ENCODE measurements at regions of chr17 and their contacts with region 1.

Region 1: GRCh38 chr17:40490289-40490853 is 11.1 kb downstream of the TNS4 start:
- DNase-seq: no peak
- H3K4me3 ChIP-seq: no peak overlapping the region
- H3K27ac ChIP-seq: no peak overlapping the region
- H3K4me1 ChIP-seq: no peaks in the 10 kb centered on the region
- H3K27me3 ChIP-seq: peaks cover 2 to 6% of the 10 kb centered on the region in 2 experiments
- CTCF ChIP-seq: no peak
- POLR2A ChIP-seq: no peak

Region 2: GRCh38 chr17:40251576-40251975 is 238.8 kb before region 1 on chr17:
- CTCF ChIA-PET with region 1: no interaction called
- POLR2A ChIA-PET with region 1: no interaction called
- dilution Hi-C with region 1: no loop called
- intact Hi-C with region 1: no loop called
- DNase-seq: peak; percentile 88
- H3K4me3 ChIP-seq: no peak overlapping the region
- H3K27ac ChIP-seq: no peak overlapping the region
- H3K4me1 ChIP-seq: peaks cover 8% of the 10 kb centered on the region
- H3K27me3 ChIP-seq: no peaks in the 10 kb centered on the region
- CTCF ChIP-seq: no peak
- POLR2A ChIP-seq: no peak

Region 3: GRCh38 chr17:40542558-40543411 is 52.4 kb after region 1 on chr17:
- CTCF ChIA-PET with region 1: no interaction called
- POLR2A ChIA-PET with region 1: interaction called, 16 read pairs
- dilution Hi-C with region 1: no loop called
- intact Hi-C with region 1: no loop called
- DNase-seq: peak; percentile 67
- H3K4me3 ChIP-seq: no peak overlapping the region
- H3K27ac ChIP-seq: no peak overlapping the region
- H3K4me1 ChIP-seq: peaks cover 5% of the 10 kb centered on the region
- H3K27me3 ChIP-seq: no peaks in the 10 kb centered on the region
- CTCF ChIP-seq: no peak
- POLR2A ChIP-seq: no peak

Measured in endothelial cell of umbilical vein (primary cell).